Thyroid gland (tissue), 4 donors: ENCODE measurements at regions of chr4 and their contacts with region 1.

Region 1: DNA sequence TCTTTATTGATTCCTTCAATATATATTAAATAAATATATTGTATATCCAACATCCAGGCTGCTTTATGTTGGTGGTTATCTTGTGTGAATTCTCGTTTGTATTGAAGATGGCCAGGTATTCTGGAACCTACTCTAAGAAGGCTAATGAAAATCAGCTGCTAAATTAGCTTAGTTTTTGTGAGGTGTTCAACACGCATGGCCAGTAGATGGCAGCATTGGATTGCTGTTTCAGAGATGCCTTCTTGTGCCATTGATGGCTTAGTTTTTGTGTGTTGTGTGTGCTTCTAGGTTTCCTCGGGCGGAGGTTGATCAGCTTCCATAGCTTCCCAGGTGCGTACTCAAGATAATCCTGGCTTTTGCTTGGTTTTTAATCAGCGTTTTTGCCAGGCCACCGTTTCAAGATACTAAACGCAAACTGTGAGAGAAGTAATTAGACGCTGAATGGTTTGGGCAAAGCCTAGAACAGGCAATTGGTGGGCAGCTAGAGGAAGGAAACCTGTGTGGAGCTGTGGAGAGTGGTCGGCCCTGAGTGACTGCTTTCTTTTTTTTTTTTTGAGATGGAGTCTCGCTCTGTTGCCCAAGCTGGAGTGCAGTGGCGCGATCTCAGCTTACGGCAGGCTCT is 15.1 kb downstream of the NOCT start:
- DNase-seq: peak; percentile 78 to 85
- H3K4me3 ChIP-seq: no peak overlapping the region
- H3K27ac ChIP-seq: peak overlapping the region in 1 of 3 donors; percentile 88
- H3K4me1 ChIP-seq: peaks cover 21 to 36% of the 10 kb centered on the region in 2 donors
- H3K27me3 ChIP-seq: no peaks in the 10 kb centered on the region
- CTCF ChIP-seq: peak; percentile 23 to 92 (median 84)
- POLR2A ChIP-seq: no peak

Region 2: GRCh38 chr4:139083956-139084803 is 53.5 kb after region 1 on chr4:
- intact Hi-C with region 1: loop called (anchors 10 kb)
- DNase-seq: peak; percentile 94
- H3K4me3 ChIP-seq: peak overlapping the region; percentile 69 to 99 (median 70)
- H3K27ac ChIP-seq: peak overlapping the region; percentile 81 to 93 (median 90)
- H3K4me1 ChIP-seq: peaks cover 7 to 16% of the 10 kb centered on the region in 2 donors
- H3K27me3 ChIP-seq: no peaks in the 10 kb centered on the region
- CTCF ChIP-seq: peak in 4 of 6 experiments; percentile 14 to 43 (median 36)
- POLR2A ChIP-seq: peak in 1 of 2 donors; percentile 79

Region 3: GRCh38 chr4:139295206-139295941 is 264.6 kb after region 1 on chr4:
- intact Hi-C with region 1: loop called (anchors 5 kb)
- DNase-seq: peak; percentile 97 to 98
- H3K4me3 ChIP-seq: peak overlapping the region; percentile 66 to 97 (median 72)
- H3K27ac ChIP-seq: peak overlapping the region; percentile 28 to 90 (median 72)
- H3K4me1 ChIP-seq: peaks cover 8 to 13% of the 10 kb centered on the region in 2 donors
- H3K27me3 ChIP-seq: no peaks in the 10 kb centered on the region
- CTCF ChIP-seq: peak; percentile 77 to 96 (median 90)
- POLR2A ChIP-seq: peak in 1 of 2 donors; percentile 79

Region 4: DNA sequence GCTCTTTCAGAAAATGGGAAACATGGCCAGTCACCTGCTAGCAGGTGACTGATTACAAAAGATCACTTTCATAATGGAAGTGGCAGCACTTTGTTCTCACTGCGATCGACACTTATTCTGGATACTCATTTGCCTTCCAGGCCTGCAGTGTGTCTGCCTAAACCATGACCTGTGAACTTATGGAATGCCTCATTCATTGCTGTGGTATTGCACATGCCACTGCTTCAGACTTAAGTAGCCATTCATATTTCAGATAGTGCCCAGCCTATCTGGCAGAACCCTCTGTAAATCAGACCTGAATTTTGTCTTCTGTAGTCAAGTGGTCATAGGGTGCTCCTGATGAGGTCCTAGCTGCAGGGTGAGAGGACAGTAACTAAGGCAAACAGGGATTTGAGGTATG is 611.6 kb after region 1 on chr4:
- intact Hi-C with region 1: no loop called
- DNase-seq: no peak
- H3K4me3 ChIP-seq: no peak overlapping the region
- H3K27ac ChIP-seq: no peak overlapping the region
- H3K4me1 ChIP-seq: no peaks in the 10 kb centered on the region
- H3K27me3 ChIP-seq: no peaks in the 10 kb centered on the region
- CTCF ChIP-seq: no peak
- POLR2A ChIP-seq: no peak